ENCODE measurements at regions of chr4 and their contacts with region 1.

Region 1: GRCh38 chr4:120709991-120710390 is 212.5 kb downstream of the PRDM5 start:
- DNase-seq: no peak
- ATAC-seq: no peak
- H3K4me3 ChIP-seq: no peak overlapping the region
- H3K27ac ChIP-seq: no peak overlapping the region
- H3K4me1 ChIP-seq: no peaks in the 10 kb centered on the region
- H3K27me3 ChIP-seq: no peaks in the 10 kb centered on the region
- CTCF ChIP-seq: no peak
- EP300 ChIP-seq: no peak
- POLR2A ChIP-seq: no peak
- RAD21 ChIP-seq: no peak

Region 2: DNA sequence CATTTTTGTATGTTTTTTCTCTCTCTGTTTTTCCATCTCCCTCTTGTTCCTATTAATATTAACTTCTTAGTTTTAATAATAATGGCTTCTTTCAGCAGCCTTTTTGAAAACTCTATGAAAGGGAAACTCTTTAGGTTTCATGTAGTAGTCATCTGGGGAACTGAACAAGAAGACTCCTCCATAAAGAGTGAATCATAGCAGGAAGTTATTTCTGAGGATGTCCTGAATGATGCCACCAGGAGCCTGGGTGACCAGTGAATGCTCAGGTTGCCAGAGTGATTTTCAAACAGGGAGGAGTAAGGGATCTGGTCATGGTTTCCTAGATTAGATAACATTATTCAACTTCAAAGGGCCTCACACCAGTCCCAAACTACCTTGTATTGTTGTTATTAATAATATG is 868.6 kb before region 1 on chr4:
- CTCF ChIA-PET with region 1: no interaction called
- POLR2A ChIA-PET with region 1: no interaction called
- in situ Hi-C with region 1: no loop called
- intact Hi-C with region 1: no loop called
- DNase-seq: no peak
- ATAC-seq: no peak
- H3K4me3 ChIP-seq: no peak overlapping the region
- H3K27ac ChIP-seq: no peak overlapping the region
- H3K4me1 ChIP-seq: no peaks in the 10 kb centered on the region
- H3K27me3 ChIP-seq: no peaks in the 10 kb centered on the region
- CTCF ChIP-seq: no peak
- EP300 ChIP-seq: no peak
- POLR2A ChIP-seq: no peak
- RAD21 ChIP-seq: no peak

Region 3: DNA sequence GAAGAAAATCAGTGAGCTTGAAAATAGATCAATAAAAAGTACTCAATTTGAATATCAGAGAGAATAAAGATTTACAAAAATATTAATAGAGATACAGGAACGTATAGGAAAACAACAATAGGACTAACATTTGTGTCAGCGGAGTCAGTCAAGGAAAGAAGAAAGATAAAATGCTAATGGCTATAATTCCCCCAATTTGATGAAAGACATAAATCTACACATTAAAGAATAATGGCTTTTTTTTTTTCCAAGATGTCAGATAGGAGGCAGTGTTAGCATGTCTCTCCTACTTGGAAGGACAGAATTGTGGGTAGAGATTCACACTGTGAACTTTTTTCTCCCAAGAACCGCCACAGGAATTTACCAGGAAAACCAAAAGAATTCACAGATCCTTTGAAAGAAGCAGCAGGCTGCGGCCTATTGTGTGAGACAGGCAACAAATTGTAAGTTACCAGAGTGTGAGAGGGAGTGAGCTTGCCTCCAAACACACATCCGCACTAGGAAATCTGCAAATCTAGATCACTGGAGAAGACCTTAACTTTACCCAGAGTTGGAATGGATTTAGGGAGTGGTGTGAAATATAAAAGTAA is 37.3 kb before region 1 on chr4:
- CTCF ChIA-PET with region 1: no interaction called
- POLR2A ChIA-PET with region 1: no interaction called
- in situ Hi-C with region 1: no loop called
- intact Hi-C with region 1: loop called (anchors 2 kb)
- DNase-seq: no peak
- ATAC-seq: no peak
- H3K4me3 ChIP-seq: no peak overlapping the region
- H3K27ac ChIP-seq: no peak overlapping the region
- H3K4me1 ChIP-seq: no peaks in the 10 kb centered on the region
- H3K27me3 ChIP-seq: no peaks in the 10 kb centered on the region
- CTCF ChIP-seq: no peak
- EP300 ChIP-seq: no peak
- POLR2A ChIP-seq: no peak
- RAD21 ChIP-seq: no peak

Region 4: GRCh38 chr4:121177246-121178137 is 467.5 kb after region 1 on chr4:
- CTCF ChIA-PET with region 1: no interaction called
- POLR2A ChIA-PET with region 1: no interaction called
- in situ Hi-C with region 1: no loop called
- intact Hi-C with region 1: no loop called
- DNase-seq: no peak
- ATAC-seq: no peak
- H3K4me3 ChIP-seq: no peak overlapping the region
- H3K27ac ChIP-seq: no peak overlapping the region
- H3K4me1 ChIP-seq: no peaks in the 10 kb centered on the region
- H3K27me3 ChIP-seq: no peaks in the 10 kb centered on the region
- CTCF ChIP-seq: no peak
- EP300 ChIP-seq: no peak
- POLR2A ChIP-seq: no peak
- RAD21 ChIP-seq: no peak